GM12878 (cell line): ENCODE measurements at regions of chr1 and their contacts with region 1.

Region 1: GRCh38 chr1:185044981-185045813 is at the start of gene RNF2:
- DNase-seq: peak; percentile 13
- ATAC-seq: peak; percentile 92
- H3K4me3 ChIP-seq: peak within 1 kb of the TSS; percentile 73
- H3K27ac ChIP-seq: no peak within 1 kb of the TSS
- H3K4me1 ChIP-seq: no peaks in the 10 kb centered on the region
- H3K27me3 ChIP-seq: no peaks in the 10 kb centered on the region
- CTCF ChIP-seq: no peak; a peak in 1 of 6 replicates
- EP300 ChIP-seq: no peak
- POLR2A ChIP-seq: peak; percentile 69
- RAD21 ChIP-seq: 0 out of 2 replicates have a peak, but pooled peaks have one; percentile 13
- polyA plus RNA-seq, gene RNF2: 4.8 to 5.2 TPM

Region 2: GRCh38 chr1:185062710-185063370 is 17.6 kb after region 1 on chr1:
- CTCF ChIA-PET with region 1: interaction called, 5 read pairs
- POLR2A ChIA-PET with region 1: interaction called, 6 read pairs
- RAD21 ChIA-PET with region 1: interaction called, 16 read pairs
- SMC1A ChIA-PET with region 1: interaction called, 15 read pairs
- in situ Hi-C with region 1: no loop called
- intact Hi-C with region 1: no loop called
- DNase-seq: no peak
- ATAC-seq: peak; percentile 62
- H3K4me3 ChIP-seq: no peak overlapping the region
- H3K27ac ChIP-seq: no peak overlapping the region
- H3K4me1 ChIP-seq: no peaks in the 10 kb centered on the region
- H3K27me3 ChIP-seq: no peaks in the 10 kb centered on the region
- CTCF ChIP-seq: no peak
- EP300 ChIP-seq: no peak
- POLR2A ChIP-seq: no peak
- RAD21 ChIP-seq: no peak

Region 3: DNA sequence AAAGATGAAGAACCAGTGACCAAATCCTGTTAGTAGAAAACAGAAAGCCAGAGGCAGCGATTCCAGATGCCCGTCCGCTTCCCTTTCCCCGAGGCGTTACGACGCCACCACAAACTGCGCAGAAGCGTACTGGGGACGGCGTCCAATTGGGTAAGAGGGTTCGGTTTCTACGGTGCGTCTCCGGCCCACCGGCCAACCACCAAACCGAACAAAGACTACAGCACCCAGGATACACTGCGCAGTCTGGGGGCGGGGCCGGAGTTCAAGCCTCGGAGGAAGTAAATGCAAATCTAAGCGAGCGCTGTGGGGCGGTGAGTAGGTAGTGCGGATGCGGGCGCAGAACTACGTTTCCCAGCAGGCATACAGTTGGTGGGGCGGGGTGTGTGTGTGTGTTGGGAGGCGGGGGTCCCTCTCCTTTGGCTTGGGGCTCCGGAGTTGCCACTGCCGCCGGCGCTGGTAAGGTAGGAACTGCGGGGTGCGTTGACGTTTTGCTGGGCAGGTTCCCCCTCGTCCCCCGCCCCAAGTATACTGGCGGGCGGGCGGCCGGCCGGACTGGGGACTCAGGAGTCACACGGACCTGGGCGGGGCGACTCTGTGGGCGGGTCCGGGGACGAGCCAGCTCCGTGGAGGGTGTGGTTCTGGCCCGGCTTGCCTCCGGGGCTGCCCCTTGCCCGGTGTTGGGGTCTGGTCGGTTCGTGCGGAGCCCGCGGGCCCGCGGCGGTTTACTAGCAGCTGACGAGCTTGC is 111.8 kb after region 1 on chr1 and contains the starts of genes SWT1 and TRMT1L:
- CTCF ChIA-PET with region 1: interaction called, 3 read pairs
- POLR2A ChIA-PET with region 1: interaction called, 7 read pairs
- RAD21 ChIA-PET with region 1: interaction called, 3 read pairs
- SMC1A ChIA-PET with region 1: interaction called, 10 read pairs
- in situ Hi-C with region 1: no loop called
- intact Hi-C with region 1: loop called (anchors 5 kb)
- DNase-seq: peak; percentile 93
- ATAC-seq: peak; percentile 92
- H3K4me3 ChIP-seq: peak within 1 kb of the TSS; percentile 94
- H3K27ac ChIP-seq: peak within 1 kb of the TSS; percentile 94
- H3K4me1 ChIP-seq: peaks cover 18% of the 10 kb centered on the region; the same call in 1 of the 2 replicates
- H3K27me3 ChIP-seq: no peaks in the 10 kb centered on the region
- CTCF ChIP-seq: no peak
- EP300 ChIP-seq: no peak
- POLR2A ChIP-seq: peak; percentile 89
- RAD21 ChIP-seq: no peak
- polyA plus RNA-seq, gene SWT1: 1.0 to 1.4 TPM
- polyA plus RNA-seq, gene TRMT1L: 3.5 to 4.1 TPM